Esophagus muscularis mucosa (tissue), 4 donors: ENCODE measurements at regions of chr14 and their contacts with region 1.

Region 1: DNA sequence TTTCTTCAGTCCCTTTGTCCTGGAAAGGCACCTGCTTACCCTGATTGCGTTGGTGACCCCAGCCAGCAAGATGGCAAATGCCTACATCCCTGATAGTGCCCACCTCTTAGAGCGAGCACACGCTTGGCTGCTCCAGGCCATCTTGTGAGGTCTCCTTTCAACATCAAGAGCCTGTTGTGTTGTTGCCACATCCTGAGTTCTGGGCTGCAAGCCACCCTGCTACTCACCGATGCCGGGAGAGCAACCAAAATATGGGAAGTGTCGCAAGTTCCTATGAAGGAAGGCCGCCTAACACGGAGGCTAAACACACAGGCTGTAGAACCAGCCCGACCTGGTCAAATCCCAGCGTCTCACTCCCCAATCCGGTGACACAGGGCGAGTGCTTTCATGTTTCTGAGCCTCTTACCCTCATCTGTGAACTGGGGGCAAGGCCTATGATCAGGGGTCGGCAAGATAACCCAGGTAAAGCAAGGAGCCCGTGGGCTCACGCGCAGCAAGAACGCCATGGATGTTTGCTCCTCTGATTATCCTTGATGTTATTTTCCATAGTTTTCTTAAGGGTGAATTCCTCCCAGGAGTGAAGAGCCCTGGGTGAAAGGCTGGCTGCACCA is 98.4 kb downstream of the LGMN start:
- DNase-seq: no peak
- H3K4me3 ChIP-seq: no peak overlapping the region
- H3K27ac ChIP-seq: peak overlapping the region; percentile 87 to 94 (median 92)
- H3K4me1 ChIP-seq: peaks cover 6 to 61% (median 59%) of the 10 kb centered on the region in 4 donors
- H3K27me3 ChIP-seq: no peaks in the 10 kb centered on the region
- CTCF ChIP-seq: no peak
- EP300 ChIP-seq: peak; percentile 73
- POLR2A ChIP-seq: no peak

Region 2: GRCh38 chr14:92603309-92604242 is 46.5 kb before region 1 on chr14:
- intact Hi-C with region 1: loop called (anchors 5 kb)
- DNase-seq: no peak
- H3K4me3 ChIP-seq: no peak overlapping the region
- H3K27ac ChIP-seq: peak overlapping the region; percentile 85 to 91 (median 87)
- H3K4me1 ChIP-seq: peaks cover 31 to 66% (median 54%) of the 10 kb centered on the region in 4 donors
- H3K27me3 ChIP-seq: no peaks in the 10 kb centered on the region
- CTCF ChIP-seq: peak; percentile 40 to 62 (median 41)
- EP300 ChIP-seq: no peak
- POLR2A ChIP-seq: no peak

Region 3: DNA sequence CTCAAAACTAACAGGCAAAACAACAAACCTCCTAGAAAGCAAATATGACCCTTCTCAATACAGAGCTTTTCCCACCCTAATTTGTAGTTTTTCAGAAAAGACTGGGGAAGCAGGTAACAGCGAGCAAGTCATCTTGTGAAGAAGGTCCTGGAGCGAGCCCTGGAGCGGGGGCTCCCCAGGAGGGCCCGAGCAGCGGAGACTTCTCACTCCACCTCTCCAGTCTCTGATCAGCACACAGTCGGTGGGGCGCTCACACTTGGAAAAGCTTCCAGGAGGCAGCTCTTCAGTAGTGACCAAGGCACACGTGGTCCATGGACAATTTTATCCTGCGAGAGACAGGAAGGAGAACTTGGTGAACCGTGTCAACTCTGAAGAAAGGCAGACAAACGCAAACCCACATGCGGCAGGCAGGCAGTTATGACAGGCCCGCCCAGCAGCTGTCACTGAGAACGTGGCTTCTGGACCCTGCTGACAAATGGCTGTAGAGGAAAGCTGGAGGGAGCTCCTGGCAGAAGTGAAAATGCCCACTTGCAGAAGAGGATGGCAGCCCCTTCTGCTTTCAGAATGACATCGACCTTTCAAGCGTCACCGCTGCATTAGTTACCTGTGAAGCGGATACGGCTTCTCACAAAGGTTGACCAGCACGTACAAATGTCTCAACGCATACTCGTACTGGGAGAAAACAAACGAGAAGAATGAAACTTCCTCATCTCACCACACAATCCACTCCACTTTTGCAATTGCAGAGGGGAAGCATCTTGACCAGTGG is 54.2 kb after region 1 on chr14:
- intact Hi-C with region 1: no loop called
- DNase-seq: no peak
- H3K4me3 ChIP-seq: no peak overlapping the region
- H3K27ac ChIP-seq: peak overlapping the region in 1 of 4 donors; percentile 35
- H3K4me1 ChIP-seq: peaks cover 0 to 3% (median 0%) of the 10 kb centered on the region in 4 donors
- H3K27me3 ChIP-seq: no peaks in the 10 kb centered on the region
- CTCF ChIP-seq: no peak
- EP300 ChIP-seq: no peak
- POLR2A ChIP-seq: no peak